ENCODE measurements at regions of chr11 and their contacts with region 1.

Region 1: GRCh38 chr11:17730608-17731462 is 3.7 kb upstream of the KCNC1 start:
- H3K4me3 ChIP-seq: no peak overlapping the region
- H3K27ac ChIP-seq: no peak overlapping the region
- H3K4me1 ChIP-seq: no peaks in the 10 kb centered on the region
- CTCF ChIP-seq: peak; percentile 78

Region 2: GRCh38 chr11:17593466-17594245 is 137.2 kb before region 1 on chr11:
- CTCF ChIA-PET with region 1: interaction called, 102 read pairs
- POLR2A ChIA-PET with region 1: interaction called, 6 read pairs
- H3K4me3 ChIP-seq: no peak overlapping the region
- H3K27ac ChIP-seq: no peak overlapping the region
- H3K4me1 ChIP-seq: no peaks in the 10 kb centered on the region
- CTCF ChIP-seq: no peak

Region 3: GRCh38 chr11:17743808-17744119 is 12.9 kb after region 1 on chr11:
- CTCF ChIA-PET with region 1: interaction called, 28 read pairs
- POLR2A ChIA-PET with region 1: interaction called, 3 read pairs
- H3K4me3 ChIP-seq: no peak overlapping the region
- H3K27ac ChIP-seq: no peak overlapping the region
- H3K4me1 ChIP-seq: no peaks in the 10 kb centered on the region
- CTCF ChIP-seq: no peak

Region 4: GRCh38 chr11:17846852-17847453 is 116.1 kb after region 1 on chr11:
- CTCF ChIA-PET with region 1: interaction called, 14 read pairs
- POLR2A ChIA-PET with region 1: no interaction called
- H3K4me3 ChIP-seq: no peak overlapping the region
- H3K27ac ChIP-seq: no peak overlapping the region
- H3K4me1 ChIP-seq: no peaks in the 10 kb centered on the region
- CTCF ChIP-seq: no peak

Region 5: GRCh38 chr11:17906436-17906835 is 175.6 kb after region 1 on chr11:
- CTCF ChIA-PET with region 1: interaction called, 32 read pairs
- POLR2A ChIA-PET with region 1: no interaction called
- H3K4me3 ChIP-seq: no peak overlapping the region
- H3K27ac ChIP-seq: no peak overlapping the region
- H3K4me1 ChIP-seq: no peaks in the 10 kb centered on the region
- CTCF ChIP-seq: no peak

Region 6: GRCh38 chr11:17967661-17968060 is 236.8 kb after region 1 on chr11:
- CTCF ChIA-PET with region 1: interaction called, 357 read pairs
- POLR2A ChIA-PET with region 1: interaction called, 3 read pairs
- H3K4me3 ChIP-seq: no peak overlapping the region
- H3K27ac ChIP-seq: no peak overlapping the region
- H3K4me1 ChIP-seq: no peaks in the 10 kb centered on the region
- CTCF ChIP-seq: no peak

Region 7: DNA sequence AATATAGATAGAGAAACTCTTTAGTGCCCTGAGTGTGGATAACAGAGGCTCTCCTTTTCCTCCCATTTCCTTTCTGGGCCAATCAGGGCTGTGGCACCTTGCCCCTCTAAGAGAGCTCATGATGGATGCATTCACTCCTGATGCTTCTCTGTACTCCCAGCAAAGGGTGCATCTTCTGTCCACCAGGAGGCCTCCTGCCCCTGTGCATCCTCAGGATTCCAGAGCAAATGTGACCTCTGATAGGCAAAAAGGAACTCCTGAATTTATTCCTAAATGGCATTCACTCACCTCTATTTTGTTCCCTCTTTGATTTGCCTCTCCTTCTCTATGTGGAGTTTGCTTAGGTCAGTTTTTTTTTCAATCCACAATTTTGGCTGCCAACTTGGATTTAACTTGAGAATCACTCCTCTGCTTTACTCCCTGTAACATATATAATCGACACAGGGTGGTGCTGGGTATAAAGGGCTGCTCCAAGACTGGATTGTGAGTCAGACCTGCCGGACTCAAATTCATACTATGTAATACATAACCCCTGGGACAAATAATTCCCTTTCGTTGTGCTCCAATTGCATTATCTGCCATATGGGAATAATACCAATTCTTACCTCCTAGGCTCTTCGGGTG is 440.7 kb after region 1 on chr11:
- CTCF ChIA-PET with region 1: no interaction called
- POLR2A ChIA-PET with region 1: no interaction called
- H3K4me3 ChIP-seq: no peak overlapping the region
- H3K27ac ChIP-seq: no peak overlapping the region
- H3K4me1 ChIP-seq: no peaks in the 10 kb centered on the region
- CTCF ChIP-seq: 0 out of 2 replicates have a peak, but pooled peaks have one; percentile 26